ENCODE measurements at regions of chr2 and their contacts with region 1.

Region 1: GRCh38 chr2:20781656-20782265 is 41.1 kb downstream of the LDAH start:
- DNase-seq: peak; percentile 57
- H3K4me3 Mint-ChIP-seq: no peak overlapping the region
- H3K27ac Mint-ChIP-seq: no peak overlapping the region
- H3K4me1 Mint-ChIP-seq: no peaks in the 10 kb centered on the region
- H3K27me3 Mint-ChIP-seq: no peaks in the 10 kb centered on the region
- CTCF ChIP-seq: peak; percentile 64

Region 2: DNA sequence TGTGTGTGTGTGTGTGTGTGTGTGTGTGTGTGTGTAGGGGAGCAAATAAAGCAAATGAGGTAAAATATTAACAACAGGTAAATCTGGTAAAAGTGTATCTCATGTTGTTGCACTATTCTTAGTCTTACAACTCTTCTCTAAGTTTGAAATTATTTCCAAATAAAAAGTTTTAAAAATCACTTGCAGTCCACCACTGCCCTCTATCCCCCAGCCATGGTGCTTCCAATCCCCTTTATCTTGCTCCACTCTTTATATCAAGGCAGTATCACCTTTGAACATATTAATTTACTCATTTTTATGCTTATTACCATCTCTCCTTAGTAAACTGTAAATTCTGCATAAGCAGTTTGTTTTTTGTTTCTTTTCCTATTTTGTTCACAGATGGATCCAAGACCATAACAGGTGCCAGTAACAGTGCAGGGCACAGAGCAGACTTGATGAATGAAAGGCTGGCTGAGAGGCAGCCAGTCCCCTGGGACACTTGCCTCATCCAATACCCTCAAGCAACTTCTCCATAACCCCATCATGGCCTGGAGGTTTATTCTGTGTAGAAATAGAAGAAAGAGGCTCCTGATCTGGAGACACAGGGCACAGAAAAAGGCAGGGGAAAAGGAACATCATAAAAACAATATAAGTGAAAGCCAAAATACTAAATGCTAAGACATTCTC is 26.5 kb before region 1 on chr2:
- CTCF ChIA-PET with region 1: interaction called, 26 read pairs
- POLR2A ChIA-PET with region 1: no interaction called
- intact Hi-C with region 1: no loop called
- DNase-seq: no peak
- H3K4me3 Mint-ChIP-seq: no peak overlapping the region
- H3K27ac Mint-ChIP-seq: no peak overlapping the region
- H3K4me1 Mint-ChIP-seq: no peaks in the 10 kb centered on the region
- H3K27me3 Mint-ChIP-seq: no peaks in the 10 kb centered on the region
- CTCF ChIP-seq: no peak

Region 3: GRCh38 chr2:20796374-20796791 is 14.6 kb after region 1 on chr2:
- CTCF ChIA-PET with region 1: interaction called, 51 read pairs
- POLR2A ChIA-PET with region 1: no interaction called
- intact Hi-C with region 1: no loop called
- DNase-seq: peak; percentile 92
- H3K4me3 Mint-ChIP-seq: peak overlapping the region; percentile 0
- H3K27ac Mint-ChIP-seq: peak overlapping the region; percentile 14
- H3K4me1 Mint-ChIP-seq: peaks cover 17% of the 10 kb centered on the region
- H3K27me3 Mint-ChIP-seq: no peaks in the 10 kb centered on the region
- CTCF ChIP-seq: no peak

Region 4: DNA sequence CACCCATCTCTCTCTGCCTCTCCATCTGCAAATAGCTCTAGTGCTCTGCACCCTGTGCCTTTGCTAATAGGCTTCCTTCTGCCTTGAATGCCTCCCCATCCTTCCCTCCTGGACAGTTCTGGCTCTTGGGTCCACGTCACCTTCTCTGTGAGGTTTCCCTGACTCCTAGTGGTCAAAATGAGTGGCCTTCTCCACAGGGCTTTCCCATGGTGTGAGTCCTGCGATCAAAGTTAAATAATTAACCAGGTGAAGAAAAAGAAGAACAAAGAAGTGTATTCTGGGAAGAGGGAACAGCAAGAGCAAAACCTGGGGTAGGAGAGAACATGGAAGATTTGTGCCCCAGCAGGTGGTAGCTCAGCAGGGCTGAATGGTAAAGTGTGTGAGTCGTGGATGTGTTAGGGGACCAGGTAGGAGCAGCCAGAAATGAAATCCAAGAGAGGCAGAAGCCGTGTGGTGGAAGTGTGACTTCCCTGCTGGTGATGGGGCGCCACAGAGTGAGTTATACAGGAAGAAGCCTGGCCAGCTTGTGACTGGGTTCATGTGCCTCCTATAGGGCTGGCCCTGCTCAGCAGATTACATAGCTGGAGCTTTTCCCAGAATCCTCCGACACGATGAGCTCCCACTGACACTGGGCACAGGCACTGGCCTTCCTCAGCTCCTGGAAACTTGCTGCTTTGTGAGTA is 135.0 kb after region 1 on chr2:
- CTCF ChIA-PET with region 1: interaction called, 26 read pairs
- POLR2A ChIA-PET with region 1: no interaction called
- intact Hi-C with region 1: no loop called
- DNase-seq: peak; percentile 25
- H3K4me3 Mint-ChIP-seq: no peak overlapping the region
- H3K27ac Mint-ChIP-seq: no peak overlapping the region
- H3K4me1 Mint-ChIP-seq: peaks cover 33% of the 10 kb centered on the region
- H3K27me3 Mint-ChIP-seq: no peaks in the 10 kb centered on the region
- CTCF ChIP-seq: no peak

Region 5: DNA sequence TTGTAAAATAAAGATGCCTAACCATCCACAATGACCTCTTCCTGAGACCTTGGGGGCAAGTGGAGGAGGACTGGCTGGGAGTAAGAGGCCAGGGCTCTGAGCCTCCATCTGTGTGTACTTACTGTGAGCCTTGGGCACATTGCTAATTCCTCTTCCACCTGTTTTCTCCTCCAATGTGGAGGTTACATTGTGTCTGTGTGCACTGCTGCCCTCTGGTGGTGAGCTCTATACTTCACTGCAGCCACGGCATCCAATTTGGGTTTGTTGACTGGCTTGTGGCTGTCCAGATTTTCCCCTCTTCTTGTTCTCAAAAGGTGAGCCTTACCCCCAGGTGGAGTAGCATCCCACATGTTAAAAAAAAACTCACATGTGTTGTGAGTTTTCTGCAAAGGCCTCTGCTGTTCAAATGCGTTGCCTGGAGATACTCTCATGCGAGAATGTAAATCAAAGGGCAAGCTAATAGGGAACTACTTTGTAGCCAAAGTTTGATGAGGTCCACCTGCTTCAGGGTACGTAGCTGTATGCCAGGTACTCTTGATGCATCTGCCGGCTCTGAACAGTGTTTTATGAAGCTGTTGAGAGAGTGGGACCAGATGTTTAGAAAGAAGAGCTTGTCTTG is 181.3 kb after region 1 on chr2:
- CTCF ChIA-PET with region 1: interaction called, 375 read pairs
- POLR2A ChIA-PET with region 1: interaction called, 3 read pairs
- intact Hi-C with region 1: loop called (anchors 1 kb)
- DNase-seq: peak; percentile 73
- H3K4me3 Mint-ChIP-seq: no peak overlapping the region
- H3K27ac Mint-ChIP-seq: no peak overlapping the region
- H3K4me1 Mint-ChIP-seq: no peaks in the 10 kb centered on the region
- H3K27me3 Mint-ChIP-seq: peaks cover 46% of the 10 kb centered on the region
- CTCF ChIP-seq: peak; percentile 79

Region 6: GRCh38 chr2:21025690-21026478 is 244.1 kb after region 1 on chr2:
- CTCF ChIA-PET with region 1: interaction called, 29 read pairs
- POLR2A ChIA-PET with region 1: no interaction called
- intact Hi-C with region 1: loop called (anchors 5 kb)
- DNase-seq: no peak
- H3K4me3 Mint-ChIP-seq: no peak overlapping the region
- H3K27ac Mint-ChIP-seq: no peak overlapping the region
- H3K4me1 Mint-ChIP-seq: no peaks in the 10 kb centered on the region
- H3K27me3 Mint-ChIP-seq: peaks cover 24% of the 10 kb centered on the region
- CTCF ChIP-seq: no peak

Region 7: DNA sequence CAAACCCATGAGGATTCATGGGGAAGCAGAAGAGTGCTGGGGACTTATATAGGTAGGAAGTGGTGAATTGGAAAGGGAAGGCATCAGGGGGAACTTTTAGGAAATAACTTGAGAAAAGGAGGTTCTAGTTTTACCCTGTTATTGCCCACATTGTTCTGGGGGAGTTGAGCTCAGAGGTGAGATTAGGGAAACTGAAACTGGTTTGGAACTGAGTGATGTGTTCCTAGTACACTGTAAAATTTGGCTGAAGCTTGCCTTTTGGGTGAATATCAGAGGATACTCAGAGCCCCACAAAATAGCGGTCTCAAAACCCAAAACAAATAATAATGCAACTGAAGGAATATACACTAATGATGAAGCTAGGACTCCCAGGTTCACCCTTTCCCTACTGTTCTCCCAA is 301.7 kb after region 1 on chr2:
- CTCF ChIA-PET with region 1: no interaction called
- POLR2A ChIA-PET with region 1: no interaction called
- intact Hi-C with region 1: no loop called
- DNase-seq: no peak
- H3K4me3 Mint-ChIP-seq: no peak overlapping the region
- H3K27ac Mint-ChIP-seq: no peak overlapping the region
- H3K4me1 Mint-ChIP-seq: no peaks in the 10 kb centered on the region
- H3K27me3 Mint-ChIP-seq: peaks cover 27% of the 10 kb centered on the region
- CTCF ChIP-seq: no peak